H1 (cell line): ENCODE measurements at regions of chr2 and their contacts with region 1.

Region 1: DNA sequence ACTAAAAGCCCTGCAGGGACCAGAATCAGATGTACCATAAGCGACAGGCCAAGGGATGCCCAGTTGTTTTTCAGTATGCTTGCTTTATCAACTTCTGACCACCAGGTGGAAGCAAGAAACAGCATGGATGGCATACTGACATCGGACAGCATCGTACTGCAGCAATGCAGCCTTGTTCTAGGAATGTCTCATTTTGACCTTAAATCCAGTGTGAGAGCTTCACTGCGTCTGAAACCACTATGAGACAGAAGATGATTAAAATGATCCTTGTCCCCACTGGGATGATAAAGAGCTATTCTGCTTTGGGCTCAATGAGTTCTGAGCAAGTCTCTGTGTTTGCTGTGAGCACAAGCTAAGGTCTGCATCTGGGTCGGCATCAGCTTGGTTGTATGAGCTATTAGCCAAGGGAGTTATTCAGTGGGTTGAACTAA is 54.3 kb downstream of the CDK15 start:
- DNase-seq: peak in 1 of 2 experiments; percentile 17
- H3K4me3 ChIP-seq: no peak overlapping the region
- H3K27ac ChIP-seq: no peak overlapping the region
- H3K4me1 ChIP-seq: peaks cover 3 to 27% (median 15%) of the 10 kb centered on the region in 4 experiments; a peak in 5 of 7 replicates
- H3K27me3 ChIP-seq: no peaks in the 10 kb centered on the region; a peak in 1 of 7 replicates
- CTCF ChIP-seq: peak; percentile 49 to 96 (median 83)
- EP300 ChIP-seq: no peak
- POLR2A ChIP-seq: no peak
- RAD21 ChIP-seq: peak; percentile 96 to 97

Region 2: DNA sequence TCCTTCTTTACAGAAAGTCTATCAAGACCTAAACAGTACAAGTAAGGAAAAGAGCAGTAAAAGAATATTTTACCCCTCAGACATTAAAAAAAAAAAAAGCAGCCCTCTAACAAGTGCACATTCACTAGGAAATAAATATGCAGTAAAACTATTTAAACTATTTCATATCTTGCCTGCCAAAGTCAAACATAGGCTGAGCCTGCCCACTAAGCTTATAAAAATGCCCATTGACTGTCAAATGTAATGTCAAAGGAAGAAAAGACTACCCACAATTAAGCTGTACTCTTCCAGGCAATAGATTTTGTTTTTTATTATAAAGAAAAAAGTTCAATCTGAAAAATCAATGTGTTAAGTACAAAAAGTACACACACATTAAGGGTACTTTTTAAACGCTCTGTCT is 91.7 kb before region 1 on chr2:
- CTCF ChIA-PET with region 1: no interaction called
- POLR2A ChIA-PET with region 1: no interaction called
- DNase-seq: no peak
- H3K4me3 ChIP-seq: no peak overlapping the region
- H3K27ac ChIP-seq: no peak overlapping the region
- H3K4me1 ChIP-seq: peaks cover 3 to 5% (median 3%) of the 10 kb centered on the region in 4 experiments; a peak in 4 of 7 replicates
- H3K27me3 ChIP-seq: no peaks in the 10 kb centered on the region
- CTCF ChIP-seq: no peak
- EP300 ChIP-seq: no peak
- POLR2A ChIP-seq: no peak
- RAD21 ChIP-seq: no peak

Region 3: GRCh38 chr2:201847481-201847880 is 13.2 kb before region 1 on chr2:
- CTCF ChIA-PET with region 1: interaction called, 16 read pairs
- POLR2A ChIA-PET with region 1: no interaction called
- DNase-seq: no peak
- H3K4me3 ChIP-seq: no peak overlapping the region
- H3K27ac ChIP-seq: no peak overlapping the region
- H3K4me1 ChIP-seq: no peaks in the 10 kb centered on the region
- H3K27me3 ChIP-seq: no peaks in the 10 kb centered on the region
- CTCF ChIP-seq: no peak
- EP300 ChIP-seq: no peak
- POLR2A ChIP-seq: no peak
- RAD21 ChIP-seq: no peak

Region 4: GRCh38 chr2:201880993-201881611 is 20.5 kb after region 1 on chr2:
- CTCF ChIA-PET with region 1: interaction called, 19 read pairs
- POLR2A ChIA-PET with region 1: no interaction called
- DNase-seq: no peak
- H3K4me3 ChIP-seq: no peak overlapping the region
- H3K27ac ChIP-seq: no peak overlapping the region
- H3K4me1 ChIP-seq: peaks cover 0 to 7% (median 1%) of the 10 kb centered on the region in 4 experiments; a peak in 2 of 7 replicates
- H3K27me3 ChIP-seq: no peaks in the 10 kb centered on the region
- CTCF ChIP-seq: no peak
- EP300 ChIP-seq: no peak
- POLR2A ChIP-seq: no peak
- RAD21 ChIP-seq: no peak

Region 5: GRCh38 chr2:201915446-201915845 is 54.8 kb after region 1 on chr2:
- CTCF ChIA-PET with region 1: interaction called, 10 read pairs
- POLR2A ChIA-PET with region 1: no interaction called
- DNase-seq: no peak
- H3K4me3 ChIP-seq: no peak overlapping the region
- H3K27ac ChIP-seq: no peak overlapping the region
- H3K4me1 ChIP-seq: peaks cover 0 to 21% (median 6%) of the 10 kb centered on the region in 4 experiments; a peak in 5 of 7 replicates
- H3K27me3 ChIP-seq: no peaks in the 10 kb centered on the region
- CTCF ChIP-seq: peak in 1 of 3 experiments; percentile 21; a peak in 1 of 4 replicates
- EP300 ChIP-seq: no peak
- POLR2A ChIP-seq: no peak
- RAD21 ChIP-seq: no peak

Region 6: DNA sequence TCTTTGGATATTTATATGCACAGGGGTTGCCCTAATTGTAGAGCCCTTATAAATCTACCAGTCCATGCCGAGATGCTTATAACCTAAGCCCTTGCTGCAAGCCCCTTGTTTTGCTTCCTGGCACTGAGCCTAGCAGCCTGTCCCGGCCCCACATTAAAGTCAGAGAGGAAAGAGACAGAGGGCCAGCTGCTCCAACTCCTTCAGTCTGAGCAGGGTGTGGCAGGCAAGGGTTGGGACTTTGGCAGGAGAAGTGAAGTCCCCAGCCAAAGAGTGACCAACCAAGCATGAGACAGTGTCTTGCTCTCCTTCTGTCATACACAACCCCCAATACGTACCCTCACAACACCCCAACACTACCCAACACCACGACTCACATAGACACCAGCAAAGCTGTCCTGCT is 118.3 kb after region 1 on chr2:
- CTCF ChIA-PET with region 1: interaction called, 12 read pairs
- POLR2A ChIA-PET with region 1: no interaction called
- DNase-seq: no peak
- H3K4me3 ChIP-seq: no peak overlapping the region
- H3K27ac ChIP-seq: no peak overlapping the region
- H3K4me1 ChIP-seq: peaks cover 8 to 23% (median 17%) of the 10 kb centered on the region in 4 experiments; a peak in 6 of 7 replicates
- H3K27me3 ChIP-seq: no peaks in the 10 kb centered on the region
- CTCF ChIP-seq: no peak
- EP300 ChIP-seq: no peak
- POLR2A ChIP-seq: no peak
- RAD21 ChIP-seq: no peak

Region 7: DNA sequence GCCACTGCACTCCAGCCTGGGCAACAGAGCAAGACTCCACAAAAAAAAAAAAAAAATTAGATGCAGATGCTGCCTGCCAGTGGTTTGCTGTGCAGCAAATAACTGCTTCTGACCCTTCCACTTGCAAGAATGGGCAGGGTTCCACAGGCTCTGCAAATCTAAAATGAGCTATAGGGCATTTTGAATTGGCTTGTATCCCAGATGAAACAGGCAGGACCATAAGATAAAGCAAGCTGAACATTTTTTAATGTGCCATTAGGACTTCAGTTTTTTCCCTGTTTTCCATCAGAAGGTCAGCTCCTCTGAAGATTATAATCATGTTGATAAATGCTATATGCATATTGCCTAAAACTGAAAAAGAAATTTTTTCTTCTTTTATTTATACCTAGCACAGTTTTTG is 157.3 kb after region 1 on chr2:
- CTCF ChIA-PET with region 1: interaction called, 13 read pairs
- POLR2A ChIA-PET with region 1: no interaction called
- DNase-seq: no peak
- H3K4me3 ChIP-seq: no peak overlapping the region
- H3K27ac ChIP-seq: no peak overlapping the region
- H3K4me1 ChIP-seq: peaks cover 0 to 16% (median 10%) of the 10 kb centered on the region in 4 experiments; a peak in 5 of 7 replicates
- H3K27me3 ChIP-seq: no peaks in the 10 kb centered on the region
- CTCF ChIP-seq: no peak
- EP300 ChIP-seq: no peak
- POLR2A ChIP-seq: no peak
- RAD21 ChIP-seq: no peak

Region 8: GRCh38 chr2:202064171-202064880 is 203.7 kb after region 1 on chr2:
- CTCF ChIA-PET with region 1: interaction called, 10 read pairs
- POLR2A ChIA-PET with region 1: no interaction called
- DNase-seq: no peak
- H3K4me3 ChIP-seq: peak overlapping the region in 1 of 4 experiments; percentile 7; a peak in 1 of 8 replicates
- H3K27ac ChIP-seq: peak overlapping the region; percentile 41
- H3K4me1 ChIP-seq: peaks cover 0 to 18% (median 14%) of the 10 kb centered on the region in 4 experiments; a peak in 3 of 7 replicates
- H3K27me3 ChIP-seq: no peaks in the 10 kb centered on the region
- CTCF ChIP-seq: no peak
- EP300 ChIP-seq: no peak
- POLR2A ChIP-seq: no peak
- RAD21 ChIP-seq: no peak